Kidney (tissue), 22 donors: ENCODE measurements at regions of chr11 and their contacts with region 1.

Region 1: DNA sequence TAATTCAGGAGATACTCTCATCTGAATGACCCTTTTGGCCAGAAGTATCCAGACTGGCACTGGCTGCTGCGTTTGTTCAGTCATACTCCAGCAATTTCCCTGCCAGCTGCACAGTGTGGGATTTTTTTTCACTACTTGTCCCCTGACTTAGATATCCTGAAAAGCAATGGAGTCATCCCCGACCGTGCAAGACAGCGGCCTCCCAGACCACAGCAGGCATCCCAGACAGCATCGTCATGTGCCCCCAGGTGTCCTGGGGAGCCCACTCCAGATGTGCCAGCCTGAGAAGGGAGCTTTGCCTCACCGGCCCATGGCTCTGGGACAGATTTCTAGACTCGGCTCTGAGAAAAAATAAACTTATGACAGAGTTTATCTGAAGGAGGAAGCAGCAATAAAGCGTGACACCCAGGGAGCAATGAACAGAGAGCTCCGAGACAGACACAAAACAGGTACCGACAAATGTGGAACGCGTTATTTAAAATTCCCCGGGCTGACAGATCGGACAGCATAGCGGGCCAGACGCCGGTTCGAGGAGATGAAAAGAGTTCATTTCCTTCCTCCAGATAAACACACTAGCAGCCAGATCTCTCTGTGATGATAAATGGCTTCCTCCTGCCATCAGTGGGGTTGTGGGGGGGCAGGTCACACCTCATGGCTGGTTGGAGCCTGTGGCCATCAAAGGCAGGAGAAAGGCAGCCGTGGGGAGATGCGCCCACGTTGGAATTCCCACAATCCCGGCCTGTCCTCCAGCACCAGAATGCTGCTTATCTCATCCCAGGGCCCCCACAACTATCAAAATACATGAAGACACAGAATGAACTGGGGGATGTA is 106.4 kb upstream of the FGF3 start:
- DNase-seq: peak in 3 of 5 donors; percentile 36 to 59 (median 48)
- H3K4me3 ChIP-seq: no peak overlapping the region
- H3K27ac ChIP-seq: no peak overlapping the region
- H3K4me1 ChIP-seq: peaks cover 0 to 4% (median 0%) of the 10 kb centered on the region in 3 donors
- H3K27me3 ChIP-seq: no peaks in the 10 kb centered on the region
- CTCF ChIP-seq: no peak

Region 2: DNA sequence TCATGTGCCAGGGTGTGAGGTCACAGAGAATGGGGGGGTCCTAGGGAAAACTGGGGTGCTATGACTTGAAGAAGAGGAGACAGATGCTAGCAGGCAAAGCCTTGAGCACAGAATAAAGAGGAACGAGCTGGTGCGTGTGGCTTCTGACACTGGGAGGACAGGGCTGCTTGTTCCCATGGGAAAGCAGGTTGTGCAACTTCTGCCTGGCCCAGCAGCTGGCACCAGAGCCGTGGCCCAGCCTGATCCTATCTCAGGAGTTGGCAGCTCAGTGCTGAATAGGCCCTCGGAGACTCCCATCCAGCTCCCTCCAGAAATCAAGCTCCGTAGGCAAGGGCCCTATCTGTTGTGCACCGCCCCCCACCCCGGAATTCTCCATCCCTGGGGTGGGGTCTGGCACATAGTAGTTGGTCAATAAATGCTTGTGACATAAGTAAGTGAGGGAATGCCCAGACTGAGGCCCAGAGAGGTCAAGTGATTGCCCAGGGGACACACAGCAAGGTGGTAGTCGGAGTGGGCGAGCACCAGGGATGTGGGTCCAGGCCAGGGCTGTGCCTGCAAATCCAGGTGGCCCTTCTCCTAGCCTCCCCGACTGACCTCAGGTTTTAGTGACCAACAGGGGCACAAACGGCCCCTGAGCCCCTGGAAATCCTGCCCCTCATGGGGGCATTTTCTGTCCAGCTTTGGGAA is 258.0 kb after region 1 on chr11:
- intact Hi-C with region 1: loop called (anchors 10 kb)
- DNase-seq: no peak
- H3K4me3 ChIP-seq: no peak overlapping the region
- H3K27ac ChIP-seq: no peak overlapping the region
- H3K4me1 ChIP-seq: no peaks in the 10 kb centered on the region
- H3K27me3 ChIP-seq: no peaks in the 10 kb centered on the region
- CTCF ChIP-seq: no peak